Endothelial cell of umbilical vein (primary cell): ENCODE measurements at regions of chr5 and their contacts with region 1.

Region 1: GRCh38 chr5:180291943-180292831 is at the start of gene MAPK9:
- DNase-seq: peak; percentile 65
- H3K4me3 ChIP-seq: peak within 1 kb of the TSS; percentile 67 to 88 (median 82)
- H3K27ac ChIP-seq: peak within 1 kb of the TSS; percentile 3
- H3K4me1 ChIP-seq: peaks cover 6% of the 10 kb centered on the region
- H3K27me3 ChIP-seq: no peaks in the 10 kb centered on the region
- CTCF ChIP-seq: no peak
- POLR2A ChIP-seq: peak; percentile 28
- total RNA-seq, gene MAPK9: 34.8 and 38.0 TPM in 2 replicates

Region 2: DNA sequence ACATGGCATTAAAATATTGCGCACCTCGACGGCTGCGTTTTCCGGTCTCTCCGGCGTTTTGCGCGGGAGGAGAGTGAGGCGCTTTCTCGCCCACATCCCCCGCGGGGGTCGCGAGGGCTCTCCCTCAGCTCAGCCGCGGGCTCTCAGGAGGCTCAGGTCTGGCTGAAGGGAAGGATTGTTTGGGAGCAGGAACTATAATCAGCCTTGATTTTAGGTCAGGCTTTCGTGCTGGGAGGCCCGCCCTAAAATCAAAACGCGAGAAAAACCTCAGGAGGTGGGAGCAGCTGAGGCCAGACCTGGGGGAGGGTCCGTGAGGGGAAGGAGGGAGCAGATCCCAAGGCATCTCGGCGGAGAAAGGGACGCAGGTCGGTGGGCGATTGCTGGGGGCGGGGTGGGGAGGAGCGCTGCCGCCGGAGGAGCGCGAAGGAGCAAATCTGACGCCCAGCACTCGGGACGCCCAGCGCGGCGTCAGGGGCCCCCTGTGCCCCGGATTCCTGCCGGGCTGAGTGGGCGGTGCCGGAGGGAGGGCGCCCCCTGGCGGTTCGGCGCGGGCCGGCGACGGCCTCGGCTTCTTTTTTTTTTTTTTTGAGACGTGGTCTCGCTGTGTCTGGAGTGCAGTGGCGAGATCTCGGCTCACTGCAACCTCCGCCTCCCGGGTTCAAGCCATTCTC is 202.0 kb before region 1 on chr5:
- CTCF ChIA-PET with region 1: no interaction called
- POLR2A ChIA-PET with region 1: no interaction called
- dilution Hi-C with region 1: no loop called
- intact Hi-C with region 1: no loop called
- DNase-seq: peak; percentile 77
- H3K4me3 ChIP-seq: peak overlapping the region; percentile 41 to 76 (median 72)
- H3K27ac ChIP-seq: peak overlapping the region; percentile 49
- H3K4me1 ChIP-seq: peaks cover 4% of the 10 kb centered on the region
- H3K27me3 ChIP-seq: peaks cover 1 to 4% of the 10 kb centered on the region in 2 experiments
- CTCF ChIP-seq: peak; percentile 79 to 85
- POLR2A ChIP-seq: no peak

Region 3: GRCh38 chr5:180328296-180329137 is 36.3 kb after region 1 on chr5:
- CTCF ChIA-PET with region 1: interaction called, 52 read pairs
- POLR2A ChIA-PET with region 1: no interaction called
- dilution Hi-C with region 1: no loop called
- intact Hi-C with region 1: loop called (anchors 1 kb)
- DNase-seq: peak; percentile 56
- H3K4me3 ChIP-seq: no peak overlapping the region
- H3K27ac ChIP-seq: no peak overlapping the region
- H3K4me1 ChIP-seq: peaks cover 7% of the 10 kb centered on the region
- H3K27me3 ChIP-seq: no peaks in the 10 kb centered on the region
- CTCF ChIP-seq: peak; percentile 74 to 83
- POLR2A ChIP-seq: no peak

Region 4: GRCh38 chr5:180470966-180471582 is 178.9 kb after region 1 on chr5:
- CTCF ChIA-PET with region 1: interaction called, 35 read pairs
- POLR2A ChIA-PET with region 1: no interaction called
- dilution Hi-C with region 1: no loop called
- intact Hi-C with region 1: loop called (anchors 1 kb)
- DNase-seq: peak; percentile 50
- H3K4me3 ChIP-seq: no peak overlapping the region
- H3K27ac ChIP-seq: no peak overlapping the region
- H3K4me1 ChIP-seq: no peaks in the 10 kb centered on the region
- H3K27me3 ChIP-seq: peaks cover 0 to 2% of the 10 kb centered on the region in 2 experiments
- CTCF ChIP-seq: peak; percentile 86
- POLR2A ChIP-seq: no peak

Region 5: GRCh38 chr5:180605554-180606214 is 313.5 kb after region 1 on chr5:
- CTCF ChIA-PET with region 1: interaction called, 4 read pairs
- POLR2A ChIA-PET with region 1: no interaction called
- dilution Hi-C with region 1: no loop called
- intact Hi-C with region 1: loop called (anchors 2 kb)
- DNase-seq: peak; percentile 59
- H3K4me3 ChIP-seq: no peak overlapping the region
- H3K27ac ChIP-seq: no peak overlapping the region
- H3K4me1 ChIP-seq: peaks cover 3% of the 10 kb centered on the region
- H3K27me3 ChIP-seq: no peaks in the 10 kb centered on the region
- CTCF ChIP-seq: peak; percentile 80 to 83
- POLR2A ChIP-seq: no peak

Region 6: DNA sequence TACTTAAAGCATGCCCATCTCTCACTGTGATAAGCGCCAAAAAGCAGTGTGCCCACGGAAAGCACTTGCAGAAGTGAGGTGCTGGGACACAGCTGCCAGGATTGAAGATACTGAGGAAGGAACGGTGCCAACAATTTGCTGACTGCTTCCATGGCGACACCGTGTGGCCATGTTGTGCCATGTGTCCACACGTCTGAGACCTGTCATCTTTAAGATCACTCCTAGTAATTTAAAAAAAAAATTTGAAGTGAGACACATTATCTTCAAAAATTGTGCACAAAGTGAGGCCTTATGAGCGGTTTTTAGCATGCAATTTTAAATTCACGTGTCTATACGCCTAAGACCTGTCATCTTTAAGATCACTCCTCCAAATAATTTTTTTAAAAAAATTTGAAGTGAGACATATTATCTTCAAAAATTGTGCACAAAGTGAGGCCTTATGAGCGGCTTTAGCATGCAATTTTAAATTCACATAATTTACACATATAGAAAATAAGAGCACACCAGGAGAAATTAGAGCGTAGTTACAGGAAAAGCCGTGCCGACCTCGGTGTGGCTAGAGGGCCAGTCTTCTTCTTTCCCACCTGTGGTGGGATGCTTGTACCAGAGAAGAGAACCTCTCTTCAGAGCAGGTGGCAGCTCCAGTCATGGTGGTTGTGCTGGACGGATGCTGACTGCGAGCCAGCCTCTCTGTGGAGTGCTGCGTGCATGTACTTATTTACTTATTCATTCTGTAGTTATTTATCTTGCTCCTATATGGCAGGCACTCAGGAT is 378.6 kb after region 1 on chr5:
- CTCF ChIA-PET with region 1: no interaction called
- POLR2A ChIA-PET with region 1: no interaction called
- dilution Hi-C with region 1: no loop called
- intact Hi-C with region 1: loop called (anchors 1 kb)
- DNase-seq: peak; percentile 78
- H3K4me3 ChIP-seq: no peak overlapping the region
- H3K27ac ChIP-seq: no peak overlapping the region
- H3K4me1 ChIP-seq: no peaks in the 10 kb centered on the region
- H3K27me3 ChIP-seq: peaks cover 10% of the 10 kb centered on the region in 2 experiments
- CTCF ChIP-seq: peak; percentile 63 to 80
- POLR2A ChIP-seq: no peak